ENCODE measurements at regions of chr3 and their contacts with region 1.

Region 1: DNA sequence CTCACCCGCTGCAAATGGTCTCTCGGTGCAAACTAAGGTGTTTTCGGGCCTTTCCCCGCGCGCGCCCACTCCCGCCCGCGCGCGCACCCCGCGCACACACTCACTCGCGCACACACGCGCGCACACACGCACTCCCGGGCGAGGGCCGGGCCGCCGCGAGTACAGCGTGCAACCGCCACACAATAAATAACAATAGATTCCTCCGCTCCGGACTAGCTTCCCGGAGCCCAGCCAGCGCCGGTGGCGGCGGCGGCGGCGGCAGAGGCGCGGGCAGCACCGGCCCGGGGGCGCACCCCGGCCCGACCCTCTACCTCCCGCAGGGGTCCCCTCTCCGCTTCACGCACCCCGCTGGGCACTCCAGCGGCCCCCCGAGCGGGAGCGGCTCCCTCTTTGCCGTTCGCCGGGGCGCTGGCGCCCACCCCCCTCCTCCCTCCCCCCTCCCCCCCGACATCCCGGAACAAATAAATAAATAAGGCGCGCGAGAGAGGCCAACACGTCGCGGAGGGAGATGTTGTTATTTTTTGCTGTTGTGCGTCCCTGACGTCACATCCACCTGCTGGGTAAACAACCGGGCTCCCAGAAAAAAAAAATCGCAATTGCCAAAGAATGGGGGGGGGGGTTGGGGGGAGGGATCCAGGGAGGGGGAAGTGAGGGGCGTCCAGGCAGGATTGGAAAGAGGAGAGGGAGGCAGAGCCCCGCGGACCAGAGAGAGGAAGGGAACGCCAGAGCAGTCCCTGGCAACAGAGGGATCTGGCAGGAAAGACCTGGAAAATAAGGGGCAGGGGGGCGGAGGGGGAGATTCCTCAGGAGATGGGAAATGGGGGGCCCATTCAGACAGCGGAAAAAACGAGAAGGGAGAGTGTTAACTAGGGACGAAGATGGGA is at the start of gene FOXP1:
- DNase-seq: peak; percentile 63
- H3K4me3 Mint-ChIP-seq: peak within 1 kb of the TSS; percentile 95
- H3K27ac Mint-ChIP-seq: peak within 1 kb of the TSS; percentile 99
- H3K4me1 Mint-ChIP-seq: peaks cover 47% of the 10 kb centered on the region
- H3K27me3 Mint-ChIP-seq: no peaks in the 10 kb centered on the region
- total RNA-seq, gene FOXP1: 95.2 to 97.4 TPM

Region 2: DNA sequence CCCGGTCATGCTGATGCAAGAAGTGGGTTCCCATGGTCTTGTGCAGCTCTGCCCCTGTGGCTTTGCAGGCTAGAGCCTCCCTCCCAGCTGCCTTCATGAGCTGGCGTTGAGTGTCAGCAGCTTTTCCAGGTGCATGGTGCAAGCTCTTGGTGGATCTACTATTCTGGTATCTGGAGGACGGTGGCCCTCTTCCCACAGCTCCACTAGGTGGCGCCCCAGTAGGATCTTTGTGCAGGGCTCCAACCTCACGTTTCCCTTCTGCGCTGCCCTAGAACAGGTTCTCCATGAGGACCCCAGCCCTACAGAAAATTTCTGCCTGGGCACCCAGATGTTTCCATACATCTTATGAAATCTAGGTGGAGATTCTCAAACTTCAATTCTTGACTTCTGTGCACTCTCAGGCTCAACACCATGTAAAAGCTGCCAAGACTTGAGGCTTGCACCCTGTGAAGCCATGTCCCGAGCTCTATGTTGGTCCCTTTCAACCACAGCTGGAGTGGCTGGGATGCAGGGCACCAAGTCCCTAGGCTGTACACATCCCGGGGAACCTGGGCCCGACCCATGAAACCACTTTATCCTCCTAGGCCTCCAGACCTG is 1033.0 kb before region 1 on chr3:
- CTCF ChIA-PET with region 1: interaction called, 3 read pairs
- intact Hi-C with region 1: loop called (anchors 1 kb)
- DNase-seq: peak; percentile 88
- H3K4me3 Mint-ChIP-seq: no peak overlapping the region
- H3K27ac Mint-ChIP-seq: no peak overlapping the region
- H3K4me1 Mint-ChIP-seq: no peaks in the 10 kb centered on the region
- H3K27me3 Mint-ChIP-seq: no peaks in the 10 kb centered on the region

Region 3: GRCh38 chr3:71006810-71007785 is 576.7 kb before region 1 on chr3:
- CTCF ChIA-PET with region 1: interaction called, 5 read pairs
- intact Hi-C with region 1: loop called (anchors 1 kb)
- DNase-seq: no peak
- H3K4me3 Mint-ChIP-seq: no peak overlapping the region
- H3K27ac Mint-ChIP-seq: peak overlapping the region; percentile 71
- H3K4me1 Mint-ChIP-seq: peaks cover 77% of the 10 kb centered on the region
- H3K27me3 Mint-ChIP-seq: no peaks in the 10 kb centered on the region

Region 4: GRCh38 chr3:71226565-71227269 is 357.1 kb before region 1 on chr3:
- CTCF ChIA-PET with region 1: interaction called, 4 read pairs
- intact Hi-C with region 1: loop called (anchors 1 kb)
- DNase-seq: peak; percentile 95
- H3K4me3 Mint-ChIP-seq: peak overlapping the region; percentile 77
- H3K27ac Mint-ChIP-seq: peak overlapping the region; percentile 94
- H3K4me1 Mint-ChIP-seq: peaks cover 83% of the 10 kb centered on the region
- H3K27me3 Mint-ChIP-seq: no peaks in the 10 kb centered on the region

Region 5: GRCh38 chr3:71444028-71444860 is 139.6 kb before region 1 on chr3:
- CTCF ChIA-PET with region 1: no interaction called
- intact Hi-C with region 1: loop called (anchors 2 kb)
- DNase-seq: peak; percentile 80
- H3K4me3 Mint-ChIP-seq: peak overlapping the region; percentile 71
- H3K27ac Mint-ChIP-seq: peak overlapping the region; percentile 98
- H3K4me1 Mint-ChIP-seq: peaks cover 93% of the 10 kb centered on the region
- H3K27me3 Mint-ChIP-seq: no peaks in the 10 kb centered on the region

Region 6: DNA sequence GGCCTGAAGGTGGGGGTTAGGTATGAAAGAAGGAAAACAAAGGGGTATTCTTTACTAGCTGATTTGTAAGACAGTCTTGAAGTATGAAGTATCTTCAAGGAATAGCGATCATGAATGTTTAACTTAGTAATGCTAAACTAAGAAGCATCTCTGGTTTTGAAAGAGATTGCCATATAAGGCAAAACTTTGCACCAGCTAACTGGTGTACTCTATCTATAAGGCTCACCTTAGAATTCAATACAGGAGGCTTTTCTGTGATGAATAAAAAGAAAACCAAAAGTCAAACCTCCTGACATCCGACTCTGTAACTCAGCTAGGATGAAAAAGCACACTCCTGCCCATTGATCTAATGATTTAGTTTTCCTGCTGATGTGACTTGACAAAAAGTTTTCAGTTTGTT is 55.0 kb before region 1 on chr3:
- CTCF ChIA-PET with region 1: interaction called, 3 read pairs
- intact Hi-C with region 1: loop called (anchors 2 kb)
- DNase-seq: no peak
- H3K4me3 Mint-ChIP-seq: no peak overlapping the region
- H3K27ac Mint-ChIP-seq: no peak overlapping the region
- H3K4me1 Mint-ChIP-seq: peaks cover 24% of the 10 kb centered on the region
- H3K27me3 Mint-ChIP-seq: no peaks in the 10 kb centered on the region